Heart left ventricle (tissue), 16 donors: ENCODE measurements at regions of chr4 and their contacts with region 1.

Region 1: GRCh38 chr4:143399113-143399949 is 62.7 kb downstream of the GAB1 start:
- DNase-seq: no peak
- ATAC-seq: peak in 1 of 4 donors; percentile 31
- H3K4me3 ChIP-seq: no peak overlapping the region
- H3K27ac ChIP-seq: peak overlapping the region in 3 of 12 donors; percentile 19 to 38 (median 21)
- H3K4me1 ChIP-seq: peaks cover 3 to 90% (median 59%) of the 10 kb centered on the region in 12 donors
- H3K27me3 ChIP-seq: no peaks in the 10 kb centered on the region
- CTCF ChIP-seq: peak; percentile 48 to 80 (median 62)
- POLR2A ChIP-seq: no peak

Region 2: DNA sequence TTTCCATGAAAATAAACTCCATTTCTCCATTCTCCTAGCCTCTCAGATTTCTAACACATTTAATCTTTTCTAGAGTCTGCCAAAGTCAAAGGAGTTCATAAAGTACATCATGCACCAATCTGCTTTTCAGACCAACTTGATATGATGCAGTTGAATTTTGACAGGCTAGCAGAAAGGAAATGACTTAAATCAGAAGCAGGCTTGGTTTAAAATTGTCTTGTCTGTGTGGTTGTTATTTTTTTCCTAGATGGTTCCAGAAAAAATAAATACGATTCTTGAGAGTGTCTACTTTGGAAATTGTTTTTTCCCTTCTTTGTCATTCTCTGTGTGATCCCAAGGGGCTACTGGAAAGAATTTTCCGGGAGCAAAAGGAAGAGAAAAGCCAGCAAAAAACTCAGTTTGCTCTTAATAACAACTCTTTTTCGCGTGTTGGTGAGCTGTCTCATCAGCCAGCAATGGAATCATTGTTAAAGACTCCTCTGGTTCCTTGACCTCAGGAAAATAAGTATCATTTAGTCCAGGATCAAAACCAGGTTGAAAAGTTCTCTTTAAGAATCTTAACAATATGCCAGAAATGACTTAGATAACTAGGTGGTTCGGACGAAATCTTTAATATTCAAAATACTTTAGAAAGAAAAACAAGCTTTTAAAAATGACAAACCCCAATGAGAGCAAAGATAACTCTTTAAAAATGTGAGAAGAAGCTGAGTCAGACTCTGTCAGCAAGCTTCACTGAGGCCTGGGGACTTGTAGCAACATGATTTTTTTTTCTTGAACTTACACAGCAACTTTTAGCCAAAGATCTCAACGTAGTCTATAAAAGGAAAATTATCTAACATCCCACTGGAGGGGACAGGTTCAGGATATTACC is 112.4 kb before region 1 on chr4:
- intact Hi-C with region 1: loop called in 1 of 10 experiments (anchors 10 kb)
- DNase-seq: no peak
- ATAC-seq: peak; percentile 53 to 65 (median 60)
- H3K4me3 ChIP-seq: peak overlapping the region in 2 of 12 donors; percentile 5 to 24
- H3K27ac ChIP-seq: peak overlapping the region; percentile 11 to 90 (median 63)
- H3K4me1 ChIP-seq: peaks cover 0 to 46% (median 7%) of the 10 kb centered on the region in 12 donors
- H3K27me3 ChIP-seq: no peaks in the 10 kb centered on the region
- CTCF ChIP-seq: no peak
- POLR2A ChIP-seq: no peak

Region 3: GRCh38 chr4:143346206-143346605 is 53.1 kb before region 1 on chr4:
- intact Hi-C with region 1: loop called in 1 of 10 experiments (anchors 10 kb)
- DNase-seq: no peak
- ATAC-seq: peak in 1 of 4 donors; percentile 25
- H3K4me3 ChIP-seq: peak overlapping the region in 8 of 12 donors; percentile 6 to 51 (median 34)
- H3K27ac ChIP-seq: peak overlapping the region in 3 of 12 donors; percentile 52 to 70 (median 68)
- H3K4me1 ChIP-seq: peaks cover 3 to 64% (median 32%) of the 10 kb centered on the region in 12 donors
- H3K27me3 ChIP-seq: no peaks in the 10 kb centered on the region
- CTCF ChIP-seq: no peak
- POLR2A ChIP-seq: no peak